Heart left ventricle (tissue), 16 donors: ENCODE measurements at regions of chr17 and their contacts with region 1.

Region 1: DNA sequence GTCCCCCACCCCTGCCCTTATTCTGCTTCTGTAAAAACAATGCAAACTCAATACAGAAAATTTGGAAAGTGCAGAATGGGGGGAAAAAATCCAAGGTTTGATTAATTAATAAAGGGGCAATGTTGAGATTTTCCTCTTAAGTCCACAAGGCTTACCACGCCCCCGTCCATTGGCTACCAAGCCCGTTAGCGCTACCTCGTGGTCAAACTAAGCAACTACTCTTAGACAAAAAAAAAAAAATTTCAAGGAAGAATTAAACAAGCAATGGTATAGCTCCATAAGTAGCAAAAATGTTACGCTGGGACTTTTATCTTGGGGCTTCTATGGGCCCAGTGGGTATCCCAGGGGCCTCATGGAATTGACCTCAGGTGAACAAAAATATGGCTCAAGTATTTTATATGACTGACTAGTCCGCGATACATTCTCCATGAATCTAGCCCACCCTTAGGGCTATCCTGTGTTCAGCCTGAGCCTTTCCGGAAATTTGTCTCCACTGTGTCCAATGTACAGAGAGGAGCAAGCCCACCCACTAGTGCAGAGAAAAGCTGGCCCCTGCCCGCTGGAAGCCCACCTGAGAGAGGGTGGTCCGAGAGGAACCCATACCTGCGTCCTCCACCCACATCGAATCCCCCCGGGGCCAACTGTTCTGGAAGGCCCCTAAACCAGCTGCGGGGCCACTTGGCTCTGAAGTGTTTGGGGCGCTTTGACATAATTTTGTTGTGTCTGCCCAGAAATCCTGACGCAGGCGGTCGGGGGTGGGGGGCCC is 19.1 kb upstream of the TEX2 start:
- DNase-seq: peak in 4 of 5 donors; percentile 42 to 63 (median 62)
- ATAC-seq: peak in 3 of 4 donors; percentile 7 to 53 (median 34)
- H3K4me3 ChIP-seq: no peak overlapping the region
- H3K27ac ChIP-seq: peak overlapping the region in 1 of 12 donors; percentile 7
- H3K4me1 ChIP-seq: peaks cover 0 to 38% (median 20%) of the 10 kb centered on the region in 12 donors
- H3K27me3 ChIP-seq: no peaks in the 10 kb centered on the region
- CTCF ChIP-seq: peak; percentile 74 to 86 (median 80)
- POLR2A ChIP-seq: no peak

Region 2: DNA sequence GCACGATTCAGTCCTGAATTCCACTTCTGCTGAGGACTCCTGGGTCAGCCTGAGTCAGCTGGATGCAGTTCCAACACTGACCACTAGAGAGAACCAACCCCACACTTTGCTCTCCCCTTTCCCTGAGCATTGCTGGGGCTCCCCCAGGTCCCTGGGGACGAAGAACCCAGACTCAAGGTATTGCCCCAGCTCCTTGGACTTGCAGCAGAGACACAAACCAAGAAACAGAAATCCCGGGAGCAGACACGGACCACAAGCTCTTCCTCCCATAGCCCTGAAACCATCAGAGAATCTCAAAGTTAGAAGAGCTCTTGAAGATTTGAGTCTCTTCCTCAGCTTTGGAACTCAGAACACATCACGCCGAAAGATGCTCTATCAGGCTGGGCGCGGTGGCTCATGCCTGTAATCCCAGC is 362.8 kb before region 1 on chr17:
- intact Hi-C with region 1: loop called in 7 of 10 experiments (anchors 5 to 10 kb)
- DNase-seq: peak in 4 of 5 donors; percentile 49 to 58 (median 54)
- ATAC-seq: peak; percentile 59 to 86 (median 86)
- H3K4me3 ChIP-seq: no peak overlapping the region
- H3K27ac ChIP-seq: no peak overlapping the region
- H3K4me1 ChIP-seq: peaks cover 0 to 7% (median 0%) of the 10 kb centered on the region in 12 donors
- H3K27me3 ChIP-seq: no peaks in the 10 kb centered on the region
- CTCF ChIP-seq: peak; percentile 85 to 97 (median 91)
- POLR2A ChIP-seq: no peak

Region 3: DNA sequence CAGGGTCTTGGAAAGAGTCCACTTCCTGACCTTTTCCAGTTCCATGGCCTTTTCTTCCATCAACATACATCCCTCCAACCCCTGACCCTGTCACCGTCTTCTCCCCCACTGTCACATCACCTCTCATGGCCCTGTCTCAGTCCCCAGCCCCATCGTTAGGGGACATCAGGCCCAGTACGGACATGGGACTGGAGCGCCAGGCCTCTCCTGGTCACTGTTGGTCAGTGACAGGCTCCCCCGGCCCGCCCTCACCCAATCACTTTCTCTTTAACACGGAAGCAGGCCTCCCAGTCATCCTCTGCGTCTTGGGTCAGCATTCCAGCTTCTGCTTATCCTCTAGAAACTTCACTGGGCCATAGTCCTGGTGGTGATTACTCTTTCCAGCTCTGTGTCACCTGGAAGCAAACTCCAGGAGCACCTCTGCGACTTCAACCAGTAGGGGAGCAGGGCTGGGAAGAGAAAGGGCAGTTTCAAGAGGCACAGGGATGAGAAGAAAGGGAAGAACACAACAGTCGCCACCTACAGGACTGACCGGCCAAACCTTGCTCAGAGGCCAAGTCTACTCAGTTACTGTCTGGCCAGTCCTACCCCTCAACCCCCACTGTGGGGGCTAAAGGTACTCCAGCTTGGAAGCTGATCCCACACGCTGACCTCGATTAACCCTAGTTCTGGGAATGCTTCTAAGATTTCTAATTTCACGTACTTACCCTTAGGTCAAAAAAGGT is 245.8 kb before region 1 on chr17:
- intact Hi-C with region 1: loop called in 1 of 10 experiments (anchors 10 kb)
- DNase-seq: no peak
- ATAC-seq: no peak
- H3K4me3 ChIP-seq: no peak overlapping the region
- H3K27ac ChIP-seq: no peak overlapping the region
- H3K4me1 ChIP-seq: no peaks in the 10 kb centered on the region
- H3K27me3 ChIP-seq: no peaks in the 10 kb centered on the region
- CTCF ChIP-seq: no peak
- POLR2A ChIP-seq: no peak

Region 4: DNA sequence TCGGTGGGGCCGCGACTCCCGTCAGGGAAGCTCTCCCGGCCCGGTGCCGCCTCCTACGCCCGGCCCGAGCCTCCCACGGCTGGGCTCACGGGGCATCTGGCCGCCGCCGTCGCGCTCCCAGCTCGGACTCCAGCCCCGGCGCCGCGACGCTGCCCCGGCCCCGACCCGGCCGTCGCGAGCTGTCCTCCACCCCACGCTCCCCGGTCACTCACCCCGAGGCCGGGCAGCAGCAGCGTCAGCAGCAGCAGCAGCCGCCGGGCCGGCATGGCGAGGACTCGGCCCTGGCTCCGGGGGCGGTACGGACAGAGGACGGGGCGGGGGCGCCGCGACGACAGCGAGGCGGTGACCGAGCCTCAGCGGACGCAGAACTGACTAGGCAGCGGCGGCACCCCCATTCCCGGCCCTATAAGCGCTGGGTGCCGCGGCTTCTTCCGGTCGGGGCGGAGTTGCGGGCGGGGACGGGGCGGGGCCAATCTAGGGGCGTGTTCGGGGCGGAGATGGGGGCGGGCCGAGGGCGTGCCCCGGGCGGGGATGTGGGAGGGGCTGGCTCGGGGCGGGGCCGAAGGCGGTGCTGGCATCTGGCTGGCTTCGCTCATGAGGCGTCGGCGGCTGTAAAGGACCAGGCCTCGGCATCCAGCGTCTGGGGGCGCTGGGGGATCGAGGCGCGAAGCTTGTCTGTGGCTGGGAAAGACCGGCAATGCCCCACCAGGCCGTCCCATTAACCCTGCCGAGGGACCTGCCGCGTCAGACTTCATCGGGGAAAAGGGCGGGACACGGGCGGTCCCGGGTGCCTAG is 152.2 kb before region 1 on chr17 and contains the start of gene ERN1:
- intact Hi-C with region 1: loop called in 3 of 10 experiments (anchors 5 kb)
- DNase-seq: peak; percentile 95 to 97 (median 95)
- ATAC-seq: peak; percentile 96 to 98 (median 97)
- H3K4me3 ChIP-seq: peak within 1 kb of the TSS; percentile 69 to 94 (median 85)
- H3K27ac ChIP-seq: peak within 1 kb of the TSS; percentile 90 to 98 (median 96)
- H3K4me1 ChIP-seq: peaks cover 0 to 54% (median 22%) of the 10 kb centered on the region in 12 donors
- H3K27me3 ChIP-seq: no peaks in the 10 kb centered on the region
- CTCF ChIP-seq: peak in 3 of 12 donors; percentile 4 to 15 (median 13)
- POLR2A ChIP-seq: peak; percentile 13 to 90
- total RNA-seq, gene ERN1: 5.1 to 18.7 (median 9.1) TPM

Region 5: DNA sequence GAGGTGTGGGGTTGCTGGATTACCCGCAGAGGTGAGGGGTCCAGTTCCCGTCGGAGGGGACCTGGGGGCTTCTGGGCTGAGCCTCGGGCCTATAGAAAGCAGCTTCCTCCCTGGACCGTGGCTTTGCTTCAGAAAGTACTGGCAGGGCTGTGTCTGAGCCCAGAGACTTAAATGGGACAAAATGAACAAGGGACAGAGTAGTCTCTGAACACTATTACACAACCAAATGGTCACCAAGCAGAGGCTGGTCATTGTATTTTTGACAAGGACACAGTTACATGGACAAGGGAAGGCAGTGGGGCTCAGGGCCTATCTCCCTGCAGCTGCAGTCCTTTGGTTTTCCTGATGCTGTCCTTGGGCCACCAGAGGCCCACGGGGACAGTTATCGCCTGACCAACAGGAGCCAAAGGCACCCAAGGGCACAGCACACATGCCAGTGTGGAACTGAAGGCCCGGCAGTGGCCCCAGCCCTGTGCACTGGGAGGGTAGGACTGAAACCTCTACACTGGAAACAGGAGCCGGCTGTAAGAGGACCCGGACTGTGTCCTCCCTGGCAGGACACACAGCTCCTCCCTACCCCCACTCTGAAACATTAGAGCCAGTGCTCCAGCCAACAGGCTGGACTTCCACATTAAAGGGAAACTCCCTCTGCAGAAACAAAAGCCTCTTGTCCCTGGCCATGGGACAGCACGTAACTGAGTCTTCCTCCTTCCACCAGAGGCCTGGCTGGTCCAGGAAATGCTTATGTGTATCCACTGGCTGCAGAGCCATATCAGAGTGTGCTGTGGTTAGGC is 126.2 kb before region 1 on chr17:
- intact Hi-C with region 1: loop called in 3 of 10 experiments (anchors 2 to 5 kb)
- DNase-seq: peak; percentile 72 to 89 (median 84)
- ATAC-seq: peak; percentile 89 to 95 (median 93)
- H3K4me3 ChIP-seq: peak overlapping the region in 2 of 12 donors; percentile 25 to 35
- H3K27ac ChIP-seq: peak overlapping the region; percentile 87 to 97 (median 93)
- H3K4me1 ChIP-seq: peaks cover 34 to 86% (median 76%) of the 10 kb centered on the region in 12 donors
- H3K27me3 ChIP-seq: no peaks in the 10 kb centered on the region
- CTCF ChIP-seq: peak in 3 of 12 donors; percentile 11 to 23 (median 19)
- POLR2A ChIP-seq: peak in 1 of 2 donors; percentile 46